ENCODE measurements at regions of chr17 and their contacts with region 1.

Region 1: DNA sequence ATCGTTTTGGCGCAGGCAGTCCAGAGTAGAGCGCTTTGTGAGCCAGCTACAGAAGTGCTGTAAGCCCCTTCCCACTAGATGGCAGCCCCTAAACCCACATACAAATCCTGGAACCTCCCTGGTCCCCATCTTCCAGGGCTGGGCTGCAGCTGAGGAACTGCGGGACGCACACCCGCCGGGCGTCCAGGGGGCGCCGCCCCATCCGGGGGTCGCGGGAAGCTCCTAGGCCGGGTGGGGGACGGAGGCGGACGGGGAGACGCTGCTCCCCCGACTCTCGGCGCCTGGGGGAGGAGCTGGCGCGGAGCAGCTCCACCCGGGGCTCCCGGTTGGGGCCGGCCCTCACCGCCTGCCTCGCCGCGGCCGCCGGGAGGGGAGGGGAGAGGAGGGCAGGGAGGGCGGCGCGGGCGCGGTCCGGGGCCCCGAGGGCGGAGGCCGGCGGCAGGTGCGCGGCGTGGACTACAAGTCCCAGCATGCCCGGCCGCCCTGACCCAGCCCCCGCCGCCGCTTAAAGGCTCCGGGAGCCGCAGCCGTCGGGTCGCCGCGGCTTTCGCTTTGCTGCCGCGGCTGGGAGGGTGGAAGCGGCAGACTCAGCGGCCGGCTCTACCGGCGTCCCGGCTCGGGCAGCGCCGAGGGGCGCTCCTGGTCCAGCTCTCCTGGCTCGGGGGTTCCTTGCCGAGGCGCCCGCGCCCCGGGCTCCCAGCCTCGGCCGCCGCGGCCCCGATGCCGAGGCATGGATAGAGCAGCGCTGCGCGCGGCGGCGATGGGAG is at the start of gene KSR1:
- DNase-seq: peak; percentile 72 to 82
- ATAC-seq: peak; percentile 86 to 97 (median 93)
- H3K4me3 ChIP-seq: peak within 1 kb of the TSS; percentile 45 to 91 (median 88)
- H3K27ac ChIP-seq: peak within 1 kb of the TSS; percentile 32 to 88 (median 80)
- H3K4me1 ChIP-seq: peaks cover 8 to 35% (median 23%) of the 10 kb centered on the region in 9 donors
- H3K27me3 ChIP-seq: no peaks in the 10 kb centered on the region
- CTCF ChIP-seq: peak in 8 of 9 donors; percentile 22 to 74 (median 53)
- total RNA-seq, gene KSR1: 5.6 to 19.6 (median 8.6) TPM

Region 2: DNA sequence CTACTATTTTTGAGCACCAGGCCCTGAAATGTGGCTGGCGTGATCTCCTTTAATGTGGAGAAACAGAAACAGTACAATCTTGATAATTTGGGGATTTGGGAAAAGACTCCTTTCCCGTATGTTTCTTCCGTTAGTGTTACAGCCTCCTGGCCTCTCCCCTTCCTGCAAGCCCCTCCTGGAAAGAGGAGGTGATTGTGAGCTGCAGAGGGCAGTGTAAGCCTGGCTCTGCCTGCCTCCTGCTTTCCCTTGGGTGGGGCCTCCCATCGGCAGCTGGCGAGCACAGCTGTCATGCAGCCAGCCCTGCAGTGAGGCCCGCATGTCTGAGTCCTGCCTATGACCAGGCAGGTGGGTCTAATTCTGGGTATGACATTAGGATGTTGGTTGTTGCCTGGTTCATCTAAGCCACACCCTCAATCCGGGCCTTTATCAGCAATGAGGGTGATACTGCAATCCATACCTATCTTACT is 210.8 kb before region 1 on chr17:
- intact Hi-C with region 1: loop called in 2 of 10 experiments (anchors 10 kb)
- DNase-seq: peak; percentile 87 to 89
- ATAC-seq: peak; percentile 91 to 97 (median 94)
- H3K4me3 ChIP-seq: peak overlapping the region in 6 of 10 donors; percentile 7 to 30 (median 22)
- H3K27ac ChIP-seq: peak overlapping the region; percentile 77 to 94 (median 84)
- H3K4me1 ChIP-seq: peaks cover 12 to 75% (median 46%) of the 10 kb centered on the region in 9 donors
- H3K27me3 ChIP-seq: no peaks in the 10 kb centered on the region
- CTCF ChIP-seq: peak; percentile 43 to 93 (median 81)

Region 3: GRCh38 chr17:27489045-27489715 is 33.1 kb after region 1 on chr17:
- intact Hi-C with region 1: loop called in 1 of 10 experiments (anchors 5 kb)
- DNase-seq: peak; percentile 62 to 80
- ATAC-seq: peak; percentile 56 to 91 (median 88)
- H3K4me3 ChIP-seq: no peak overlapping the region
- H3K27ac ChIP-seq: peak overlapping the region in 9 of 10 donors; percentile 3 to 78 (median 45)
- H3K4me1 ChIP-seq: peaks cover 15 to 72% (median 44%) of the 10 kb centered on the region in 9 donors
- H3K27me3 ChIP-seq: no peaks in the 10 kb centered on the region
- CTCF ChIP-seq: no peak

Region 4: DNA sequence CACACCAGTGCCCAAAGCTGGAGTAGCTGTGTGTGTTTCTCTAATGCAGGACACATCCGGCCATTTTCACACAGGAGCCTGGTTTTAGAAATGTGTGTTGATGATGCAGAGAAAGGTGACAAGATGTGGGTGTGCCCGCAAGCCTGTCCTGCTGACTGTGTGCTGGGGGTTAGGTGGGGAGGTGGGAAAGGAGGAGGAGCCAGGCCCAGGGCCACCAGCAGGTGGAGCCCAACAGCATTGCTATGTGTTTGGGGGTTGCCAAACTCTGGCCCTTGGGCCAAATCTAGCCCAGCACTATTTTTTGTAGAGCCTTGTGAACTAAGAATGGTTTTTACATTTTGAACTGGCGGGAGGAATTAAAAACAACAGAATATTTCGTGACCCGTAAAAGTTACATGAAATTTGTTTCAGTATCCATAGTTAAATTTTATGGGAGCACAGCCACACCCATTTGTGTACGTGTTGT is 113.2 kb after region 1 on chr17:
- intact Hi-C with region 1: loop called in 4 of 10 experiments (anchors 5 to 10 kb)
- DNase-seq: no peak
- ATAC-seq: peak in 5 of 8 donors; percentile 25 to 44 (median 32)
- H3K4me3 ChIP-seq: no peak overlapping the region
- H3K27ac ChIP-seq: peak overlapping the region in 1 of 10 donors; percentile 49
- H3K4me1 ChIP-seq: peaks cover 4 to 86% (median 56%) of the 10 kb centered on the region in 9 donors
- H3K27me3 ChIP-seq: no peaks in the 10 kb centered on the region
- CTCF ChIP-seq: peak in 7 of 9 donors; percentile 46 to 67 (median 56)

Region 5: GRCh38 chr17:27654654-27655524 is 198.8 kb after region 1 on chr17:
- intact Hi-C with region 1: loop called in 1 of 10 experiments (anchors 10 kb)
- DNase-seq: peak; percentile 54 to 74
- ATAC-seq: peak in 7 of 8 donors; percentile 25 to 52 (median 46)
- H3K4me3 ChIP-seq: no peak overlapping the region
- H3K27ac ChIP-seq: no peak overlapping the region
- H3K4me1 ChIP-seq: peaks cover 0 to 4% (median 0%) of the 10 kb centered on the region in 9 donors
- H3K27me3 ChIP-seq: peaks cover 0 to 6% (median 0%) of the 10 kb centered on the region in 7 donors
- CTCF ChIP-seq: peak; percentile 88 to 97 (median 92)

Measured in heart right ventricle (tissue), 16 donors.